Activated CD4-positive, alpha-beta T cell treated with anti-CD3 and anti-CD28 coated beads, Interleukin-2, amount 10 ng/mL, durations not matched to agents 24 days and 14 days (primary cell): ENCODE measurements at regions of chr4 and their contacts with region 1.

Region 1: DNA sequence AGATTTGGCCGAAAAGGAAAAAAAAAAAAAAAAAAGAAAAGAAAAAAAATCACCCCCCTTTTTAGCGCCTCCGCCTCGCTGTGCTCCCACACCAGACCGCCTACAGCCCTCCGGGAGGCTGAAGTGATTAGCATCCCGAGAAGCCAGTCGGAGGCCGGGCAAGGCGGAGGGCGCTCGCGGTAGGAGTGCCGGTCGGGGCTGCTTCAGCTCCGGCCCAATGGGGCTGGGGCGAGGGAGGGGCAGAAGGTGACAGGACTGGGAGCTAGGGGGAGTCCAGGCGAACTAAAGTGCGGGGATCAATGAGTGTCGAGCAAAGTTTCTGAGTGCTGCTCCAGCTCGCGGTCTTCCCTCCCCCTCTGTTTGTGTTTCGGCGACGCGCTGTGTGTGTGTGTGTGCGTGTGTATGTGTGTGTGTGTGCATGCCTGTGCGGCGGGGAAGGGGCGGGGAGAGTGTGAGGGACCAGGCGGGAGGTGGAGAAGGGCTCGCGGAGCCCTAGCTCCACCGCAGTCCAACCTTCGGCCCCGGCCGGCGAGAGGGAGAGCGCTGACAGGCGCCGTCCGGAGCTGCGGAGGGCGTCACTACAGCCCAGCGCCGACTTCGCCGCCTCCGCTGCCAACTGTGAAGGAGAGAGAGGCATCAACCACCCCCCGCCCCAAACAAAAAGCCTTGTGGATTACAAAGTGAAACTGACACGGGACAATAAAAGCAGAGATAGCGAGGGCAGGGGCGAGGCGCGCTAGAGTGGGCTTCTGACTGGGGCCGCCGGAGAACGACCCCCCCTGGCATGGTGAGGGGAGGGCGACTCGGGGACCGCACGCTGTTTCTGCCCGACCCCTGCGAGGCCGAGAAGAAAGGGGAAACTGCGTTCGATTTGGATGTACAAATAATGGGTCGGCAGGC is at the start of gene FAT4:
- DNase-seq: peak; percentile 82
- H3K4me3 Mint-ChIP-seq: peak within 1 kb of the TSS; percentile 89
- H3K27ac Mint-ChIP-seq: peak within 1 kb of the TSS; percentile 53
- H3K4me1 Mint-ChIP-seq: peaks cover 18% of the 10 kb centered on the region
- H3K27me3 Mint-ChIP-seq: peaks cover 53% of the 10 kb centered on the region
- total RNA-seq, gene FAT4: not detected in 2 replicates

Region 2: DNA sequence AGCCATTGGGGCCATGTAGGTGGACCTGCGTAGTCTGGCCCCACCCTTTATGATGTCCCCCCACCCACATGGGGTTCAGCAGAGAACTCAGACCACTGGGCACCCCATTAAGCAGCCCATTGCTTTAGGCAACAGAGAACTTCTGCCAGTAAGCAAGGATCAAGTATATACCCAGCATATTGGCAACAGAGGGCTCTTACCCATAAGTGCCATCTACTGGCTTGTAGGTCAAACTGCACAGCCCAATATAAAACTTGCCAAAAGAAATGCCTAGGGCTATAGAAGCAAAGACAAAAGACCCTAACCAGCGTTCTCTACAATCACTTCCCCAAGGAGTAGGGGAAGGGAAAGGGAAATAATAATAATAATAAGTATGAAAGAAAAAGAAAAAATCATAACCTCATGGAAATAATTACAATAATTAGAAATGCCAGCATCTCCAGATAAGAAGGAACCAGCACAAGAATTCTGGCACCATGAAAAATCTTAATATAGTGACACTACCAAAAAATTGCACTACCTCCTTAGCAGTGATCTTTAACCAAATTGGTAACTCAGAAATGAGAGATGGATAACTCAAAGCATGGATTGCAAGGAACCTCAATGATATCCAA is 1090.5 kb after region 1 on chr4:
- intact Hi-C with region 1: loop called (anchors 5 kb)
- DNase-seq: no peak
- H3K4me3 Mint-ChIP-seq: no peak overlapping the region
- H3K27ac Mint-ChIP-seq: no peak overlapping the region
- H3K4me1 Mint-ChIP-seq: no peaks in the 10 kb centered on the region
- H3K27me3 Mint-ChIP-seq: no peaks in the 10 kb centered on the region

Region 3: GRCh38 chr4:126604268-126604867 is 1289.4 kb after region 1 on chr4:
- intact Hi-C with region 1: loop called (anchors 5 kb)
- DNase-seq: no peak
- H3K4me3 Mint-ChIP-seq: no peak overlapping the region
- H3K27ac Mint-ChIP-seq: no peak overlapping the region
- H3K4me1 Mint-ChIP-seq: no peaks in the 10 kb centered on the region
- H3K27me3 Mint-ChIP-seq: no peaks in the 10 kb centered on the region